ENCODE measurements at regions of chr15 and their contacts with region 1.

Region 1: GRCh38 chr15:40694688-40695468 is at the start of gene RAD51:
- DNase-seq: peak; percentile 89 to 98
- H3K4me3 ChIP-seq: peak within 1 kb of the TSS; percentile 80
- CTCF ChIP-seq: no peak
- POLR2A ChIP-seq: peak in 1 of 2 donors; percentile 36
- total RNA-seq, gene RAD51: 0.46 to 1.4 (median 0.68) TPM

Region 2: GRCh38 chr15:41806291-41807181 is 1111.7 kb after region 1 on chr15:
- intact Hi-C with region 1: loop called (anchors 5 kb)
- DNase-seq: no peak
- H3K4me3 ChIP-seq: no peak overlapping the region
- CTCF ChIP-seq: no peak
- POLR2A ChIP-seq: no peak

Region 3: DNA sequence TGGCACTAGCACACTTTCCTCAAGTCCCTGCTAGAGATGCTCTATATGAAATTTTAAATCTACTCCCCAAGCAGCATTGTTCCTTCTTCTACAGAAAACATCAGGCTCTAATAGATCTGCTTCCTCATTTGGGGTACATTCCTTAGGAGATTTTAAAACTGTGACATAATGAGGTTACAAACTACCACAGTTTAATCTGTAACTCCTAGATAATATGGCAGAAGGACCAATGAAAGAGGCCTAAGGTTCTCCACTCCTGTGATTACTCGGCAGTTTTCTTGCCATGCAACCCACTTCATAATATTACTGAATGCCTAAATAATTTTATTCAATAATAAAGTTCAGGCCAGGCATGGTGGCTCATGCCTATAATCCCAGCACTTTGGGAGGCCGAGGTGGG is 1779.9 kb after region 1 on chr15:
- intact Hi-C with region 1: no loop called
- DNase-seq: no peak
- H3K4me3 ChIP-seq: no peak overlapping the region
- CTCF ChIP-seq: no peak
- POLR2A ChIP-seq: no peak

Measured in lower leg skin (tissue), 4 donors.